SK-N-SH (cell line): ENCODE measurements at regions of chr3 and their contacts with region 1.

Region 1: DNA sequence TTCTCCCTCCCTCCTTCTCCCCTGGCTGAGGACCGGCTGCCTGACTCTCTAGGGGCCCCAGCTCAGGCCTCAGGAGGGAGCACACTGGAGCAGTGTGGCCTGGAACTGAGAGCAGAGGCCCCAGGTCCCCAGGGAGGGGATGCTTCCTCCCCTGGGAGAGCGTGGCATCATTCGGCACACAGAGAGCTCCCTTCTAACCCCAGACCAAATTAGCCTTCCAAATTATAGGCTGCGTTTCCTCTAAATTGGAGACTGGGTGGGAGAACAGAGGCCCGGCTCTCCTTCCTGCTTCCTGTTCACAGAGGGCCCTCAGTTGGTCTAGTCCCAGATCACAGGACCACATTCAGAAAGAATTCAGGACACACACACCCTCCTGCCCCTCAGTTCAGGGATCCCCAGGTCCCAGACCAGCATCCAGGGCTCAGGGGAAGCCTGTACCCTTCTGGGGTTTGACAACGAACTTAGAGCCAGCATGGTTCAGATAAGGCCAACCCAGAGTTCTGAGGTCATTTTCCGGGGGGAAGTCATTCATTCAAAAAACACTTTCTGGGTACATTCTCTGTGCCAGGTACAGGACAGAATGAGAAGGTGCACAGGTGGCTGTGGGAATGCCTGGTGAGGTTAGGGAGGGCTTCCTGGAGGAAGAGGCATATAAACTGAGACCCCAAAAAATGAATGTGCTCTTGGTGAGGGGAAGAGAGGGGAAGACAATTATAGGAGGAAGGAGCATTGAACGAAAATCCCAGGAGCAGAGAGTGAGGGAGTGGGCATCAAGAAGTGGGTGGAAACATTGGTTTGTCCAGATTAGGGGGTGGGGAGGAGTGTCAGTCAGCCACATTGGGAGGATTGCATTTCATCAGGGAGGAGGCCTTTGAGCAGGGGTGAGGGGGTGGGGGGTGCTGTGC is 28.4 kb upstream of the RPL29 start:
- DNase-seq: no peak
- H3K4me3 ChIP-seq: no peak overlapping the region
- H3K27ac ChIP-seq: peak overlapping the region in 1 of 2 experiments; percentile 88; a peak in 2 of 4 replicates
- H3K4me1 ChIP-seq: peaks cover 20 to 82% of the 10 kb centered on the region in 2 experiments; a peak in 2 of 4 replicates
- H3K27me3 ChIP-seq: no peaks in the 10 kb centered on the region
- CTCF ChIP-seq: no peak
- EP300 ChIP-seq: no peak
- RAD21 ChIP-seq: no peak

Region 2: DNA sequence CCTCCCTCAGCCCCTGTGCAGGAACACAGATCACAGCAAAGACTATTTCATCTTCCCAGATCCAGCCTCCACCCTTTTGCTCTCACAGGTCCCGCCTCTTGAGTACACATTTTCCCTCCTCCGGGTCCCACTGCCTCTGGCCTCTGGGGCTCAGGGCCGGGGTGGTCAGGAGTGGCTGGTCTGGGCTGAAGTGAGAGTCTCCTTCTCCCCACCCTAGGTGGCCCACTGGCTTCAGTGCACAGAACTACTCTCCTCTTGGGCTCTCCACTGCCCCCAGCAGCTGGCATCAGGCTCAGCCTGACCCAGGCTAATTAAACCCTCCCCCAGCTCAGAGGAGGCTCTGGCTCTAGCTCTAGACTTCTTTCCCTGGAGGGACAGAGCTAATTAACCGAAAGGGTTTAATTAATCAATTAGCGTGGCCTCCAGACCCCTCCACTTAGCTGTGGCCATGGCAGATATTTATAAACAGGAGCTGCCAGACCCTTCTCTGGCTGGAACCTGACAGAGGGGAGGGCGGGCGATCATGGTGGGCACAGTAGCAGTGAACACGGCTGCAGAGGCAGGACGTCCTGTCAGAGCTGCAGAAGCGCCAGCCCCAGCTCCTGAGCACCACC is 17.1 kb after region 1 on chr3:
- CTCF ChIA-PET with region 1: interaction called, 983 read pairs
- POLR2A ChIA-PET with region 1: interaction called, 218 read pairs
- DNase-seq: peak; percentile 93
- H3K4me3 ChIP-seq: no peak overlapping the region
- H3K27ac ChIP-seq: peak overlapping the region in 1 of 2 experiments; percentile 100; a peak in 2 of 4 replicates
- H3K4me1 ChIP-seq: peaks cover 18 to 87% of the 10 kb centered on the region in 2 experiments; a peak in 3 of 4 replicates
- H3K27me3 ChIP-seq: no peaks in the 10 kb centered on the region
- CTCF ChIP-seq: peak; percentile 52
- EP300 ChIP-seq: peak in 1 of 2 experiments; percentile 98; a peak in 2 of 4 replicates
- RAD21 ChIP-seq: peak; percentile 66

Region 3: DNA sequence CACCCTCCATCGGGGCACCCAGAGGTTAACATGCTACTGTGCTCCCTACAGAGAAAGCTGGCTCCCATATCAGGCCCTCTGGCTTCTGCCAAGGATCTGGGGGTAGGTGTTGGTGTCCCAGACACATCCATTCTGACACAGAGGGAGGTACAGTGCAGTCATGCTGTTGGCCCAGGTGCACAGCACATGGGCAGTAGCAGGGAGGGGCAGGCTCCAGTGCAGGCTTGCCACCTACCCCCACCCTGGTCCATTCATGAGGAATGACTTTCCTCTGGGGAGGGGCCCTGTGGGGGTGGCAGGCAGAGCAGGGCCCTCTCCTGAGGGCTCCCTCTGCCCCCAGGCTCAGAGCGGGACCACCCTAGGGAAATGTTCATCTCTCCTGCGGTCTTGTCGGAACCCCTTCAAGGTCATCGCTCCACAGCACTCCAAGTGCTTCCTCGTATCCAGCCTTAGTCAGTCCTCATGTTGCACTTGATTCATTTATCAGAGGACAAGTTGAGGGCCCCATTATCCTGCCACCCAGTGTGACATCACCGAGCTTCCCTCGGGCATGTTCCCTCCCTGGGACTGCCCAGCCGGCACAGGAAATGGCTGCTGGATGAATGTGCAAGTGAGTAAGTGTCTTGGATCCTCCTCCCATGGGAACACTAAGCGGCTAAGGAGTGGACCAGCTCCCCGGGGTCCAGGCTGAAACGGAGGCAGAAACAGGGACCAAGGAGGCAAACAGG is 22.2 kb after region 1 on chr3:
- CTCF ChIA-PET with region 1: interaction called, 983 read pairs
- POLR2A ChIA-PET with region 1: interaction called, 218 read pairs
- DNase-seq: peak; percentile 58
- H3K4me3 ChIP-seq: 0 out of 4 replicates have a peak overlapping the region, but pooled peaks of 1 of the 2 experiments have one; percentile 36
- H3K27ac ChIP-seq: peak overlapping the region; percentile 93 to 100
- H3K4me1 ChIP-seq: peaks cover 31 to 87% of the 10 kb centered on the region in 2 experiments
- H3K27me3 ChIP-seq: no peaks in the 10 kb centered on the region
- CTCF ChIP-seq: no peak
- EP300 ChIP-seq: peak in 1 of 2 experiments; percentile 65; a peak in 1 of 4 replicates
- RAD21 ChIP-seq: no peak